Activated CD4-positive, alpha-beta T cell treated with anti-CD3 and anti-CD28 coated beads, Interleukin-2, amount 10 ng/mL, durations not matched to agents 24 days and 14 days (primary cell): ENCODE measurements at regions of chr5 and their contacts with region 1.

Region 1: GRCh38 chr5:151447174-151448037 is at the start of gene SLC36A1:
- DNase-seq: peak; percentile 98
- H3K4me3 Mint-ChIP-seq: peak within 1 kb of the TSS; percentile 92
- H3K27ac Mint-ChIP-seq: peak within 1 kb of the TSS; percentile 93
- H3K4me1 Mint-ChIP-seq: peaks cover 19% of the 10 kb centered on the region
- H3K27me3 Mint-ChIP-seq: peaks cover 43% of the 10 kb centered on the region
- total RNA-seq, gene SLC36A1: 7.2 and 7.8 TPM in 2 replicates

Region 2: GRCh38 chr5:151463137-151464029 is 16.0 kb after region 1 on chr5:
- intact Hi-C with region 1: loop called (anchors 2 kb)
- DNase-seq: no peak
- H3K4me3 Mint-ChIP-seq: no peak overlapping the region
- H3K27ac Mint-ChIP-seq: no peak overlapping the region
- H3K4me1 Mint-ChIP-seq: no peaks in the 10 kb centered on the region
- H3K27me3 Mint-ChIP-seq: no peaks in the 10 kb centered on the region

Region 3: DNA sequence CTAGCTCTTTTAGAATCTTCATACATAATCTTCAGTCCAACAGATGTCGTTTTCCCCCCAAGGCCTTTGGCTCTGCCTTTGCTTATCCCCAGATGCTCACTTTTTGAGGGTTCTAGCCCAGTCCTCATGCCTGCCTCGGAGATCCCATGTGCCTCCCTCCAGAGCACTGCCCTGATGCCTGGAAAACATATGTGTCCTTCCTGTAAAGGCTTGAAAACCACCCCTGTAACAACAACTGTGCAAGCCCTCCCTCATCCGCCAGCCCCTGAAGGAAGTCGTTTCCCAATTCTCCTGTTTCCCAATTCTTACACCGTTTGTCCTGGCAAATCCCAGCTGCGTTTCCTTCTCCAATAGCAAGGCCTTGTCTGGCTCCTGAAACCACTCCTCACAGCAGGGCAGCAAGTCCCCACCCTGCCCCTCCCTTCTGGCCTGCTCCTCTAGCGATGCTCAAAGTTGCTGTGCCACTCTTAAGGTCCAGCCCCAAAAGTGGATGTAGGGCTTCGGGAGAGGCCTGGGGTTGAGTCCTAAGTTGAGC is 52.2 kb after region 1 on chr5:
- intact Hi-C with region 1: loop called (anchors 1 kb)
- DNase-seq: no peak
- H3K4me3 Mint-ChIP-seq: no peak overlapping the region
- H3K27ac Mint-ChIP-seq: no peak overlapping the region
- H3K4me1 Mint-ChIP-seq: no peaks in the 10 kb centered on the region
- H3K27me3 Mint-ChIP-seq: no peaks in the 10 kb centered on the region

Region 4: GRCh38 chr5:151523335-151523734 is 75.9 kb after region 1 on chr5:
- intact Hi-C with region 1: loop called (anchors 1 kb)
- DNase-seq: peak; percentile 81
- H3K4me3 Mint-ChIP-seq: no peak overlapping the region
- H3K27ac Mint-ChIP-seq: no peak overlapping the region
- H3K4me1 Mint-ChIP-seq: no peaks in the 10 kb centered on the region
- H3K27me3 Mint-ChIP-seq: no peaks in the 10 kb centered on the region

Region 5: DNA sequence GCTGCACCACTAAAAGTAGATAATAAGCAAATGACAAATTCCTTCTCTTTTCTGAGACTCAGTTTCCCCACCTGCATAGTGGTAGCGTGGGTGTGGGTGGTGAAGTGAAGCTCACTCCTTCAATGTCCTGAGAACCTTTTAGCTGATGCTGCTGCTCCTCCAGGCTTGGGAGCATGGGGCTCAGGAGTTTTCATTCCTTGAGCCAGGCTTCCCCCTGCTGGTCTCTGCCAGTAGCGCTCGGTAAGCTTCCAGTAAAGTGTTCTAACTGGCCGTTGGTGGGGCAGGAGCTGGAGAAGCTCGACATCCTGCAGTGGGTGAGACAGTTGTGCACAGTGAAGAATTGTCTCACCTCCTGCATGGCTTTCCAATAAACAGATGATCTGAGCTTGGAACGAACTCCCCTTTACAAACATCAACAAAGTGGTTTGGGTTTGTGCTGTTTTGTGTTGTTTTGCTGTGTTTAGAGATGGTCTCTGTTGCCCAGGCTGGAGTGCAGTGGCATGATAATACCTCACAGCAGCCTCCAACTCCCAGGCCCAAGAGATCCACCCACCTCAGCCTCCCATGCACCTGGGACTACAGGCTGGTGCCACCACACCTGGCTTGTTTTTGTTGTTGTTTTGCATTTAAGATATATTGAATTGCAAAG is 204.7 kb after region 1 on chr5:
- intact Hi-C with region 1: loop called (anchors 1 kb)
- DNase-seq: peak; percentile 88
- H3K4me3 Mint-ChIP-seq: no peak overlapping the region
- H3K27ac Mint-ChIP-seq: no peak overlapping the region
- H3K4me1 Mint-ChIP-seq: no peaks in the 10 kb centered on the region
- H3K27me3 Mint-ChIP-seq: peaks cover 20% of the 10 kb centered on the region

Region 6: GRCh38 chr5:151740336-151740942 is 293.0 kb after region 1 on chr5:
- intact Hi-C with region 1: loop called (anchors 10 kb)
- DNase-seq: peak; percentile 86
- H3K4me3 Mint-ChIP-seq: no peak overlapping the region
- H3K27ac Mint-ChIP-seq: no peak overlapping the region
- H3K4me1 Mint-ChIP-seq: peaks cover 19% of the 10 kb centered on the region
- H3K27me3 Mint-ChIP-seq: no peaks in the 10 kb centered on the region

Region 7: DNA sequence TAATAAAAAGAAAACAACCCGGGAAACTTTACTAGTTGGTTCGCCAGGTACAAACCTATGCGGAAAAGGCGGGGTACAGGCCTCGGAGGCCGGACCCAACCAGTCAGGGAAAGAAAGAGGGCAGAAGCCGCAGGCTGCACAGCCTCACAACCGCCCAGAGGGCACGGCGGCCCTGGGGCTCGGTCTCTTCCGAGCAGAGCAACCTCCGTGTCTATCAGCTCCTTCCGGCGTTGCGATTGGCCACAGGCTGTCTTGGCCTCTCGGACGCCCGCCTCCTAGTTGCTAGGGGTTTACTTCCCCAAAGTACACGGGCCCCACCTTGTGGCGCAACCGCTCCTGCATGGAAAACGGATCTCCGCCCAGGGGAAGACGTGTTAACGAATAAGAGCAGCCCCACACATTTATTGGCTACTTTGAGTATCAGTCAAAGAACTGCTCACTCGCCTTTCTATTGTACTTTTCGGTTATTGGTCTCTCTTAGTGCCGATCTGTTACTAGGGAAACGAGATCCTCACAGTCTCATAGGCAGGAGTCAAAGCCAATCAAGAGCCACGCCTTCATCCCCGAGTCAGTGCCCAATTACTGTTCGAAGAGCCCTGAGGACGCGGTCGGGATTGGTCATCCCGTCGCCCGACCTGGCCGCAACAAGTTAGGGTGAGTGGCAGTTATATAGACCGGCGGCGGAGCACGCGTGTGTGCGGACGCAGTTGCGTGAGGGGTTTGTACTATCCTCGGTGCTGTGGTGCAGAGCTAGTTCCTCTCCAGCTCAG is 324.0 kb after region 1 on chr5 and contains the start of gene G3BP1:
- intact Hi-C with region 1: loop called (anchors 1 kb)
- DNase-seq: peak; percentile 100
- H3K4me3 Mint-ChIP-seq: peak within 1 kb of the TSS; percentile 98
- H3K27ac Mint-ChIP-seq: peak within 1 kb of the TSS; percentile 92
- H3K4me1 Mint-ChIP-seq: peaks cover 30% of the 10 kb centered on the region
- H3K27me3 Mint-ChIP-seq: no peaks in the 10 kb centered on the region
- total RNA-seq, gene G3BP1: 362 and 367 TPM in 2 replicates